K562 (cell line): ENCODE measurements at regions of chr12 and their contacts with region 1.

Region 1: DNA sequence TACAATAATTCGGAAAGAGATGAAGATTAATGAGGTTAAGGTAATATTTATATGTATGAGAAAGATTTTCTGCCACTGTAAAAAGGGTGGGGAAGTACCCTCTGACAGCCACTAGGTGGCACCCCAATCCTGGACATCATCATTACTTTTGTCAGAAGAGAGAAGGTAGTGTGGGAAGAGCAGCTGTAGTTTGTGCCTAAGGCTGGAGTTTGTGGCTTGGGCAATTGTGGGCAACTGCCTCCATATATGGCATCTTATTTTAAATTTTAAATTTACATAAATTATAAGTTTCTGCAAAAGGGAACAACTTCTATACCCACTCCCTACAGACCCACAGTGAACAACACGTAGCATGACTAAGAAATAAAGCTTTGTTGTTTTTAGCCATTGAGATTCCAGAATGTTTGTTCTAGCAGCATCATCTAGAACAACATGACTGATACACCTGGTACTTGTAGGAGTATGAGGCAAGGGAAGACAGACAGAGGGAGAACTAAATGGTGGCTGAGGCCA is 34.4 kb upstream of the SYCP3 start:
- DNase-seq: peak; percentile 64 to 78 (median 70)
- ATAC-seq: peak; percentile 91
- H3K4me3 ChIP-seq: no peak overlapping the region
- H3K27ac ChIP-seq: no peak overlapping the region
- H3K4me1 ChIP-seq: no peaks in the 10 kb centered on the region
- H3K27me3 ChIP-seq: no peaks in the 10 kb centered on the region
- CTCF ChIP-seq: peak; percentile 73 to 94 (median 82)
- EP300 ChIP-seq: 0 out of 2 replicates have a peak, but pooled peaks have one; percentile 21
- POLR2A ChIP-seq: no peak
- RAD21 ChIP-seq: peak; percentile 92 to 93

Region 2: DNA sequence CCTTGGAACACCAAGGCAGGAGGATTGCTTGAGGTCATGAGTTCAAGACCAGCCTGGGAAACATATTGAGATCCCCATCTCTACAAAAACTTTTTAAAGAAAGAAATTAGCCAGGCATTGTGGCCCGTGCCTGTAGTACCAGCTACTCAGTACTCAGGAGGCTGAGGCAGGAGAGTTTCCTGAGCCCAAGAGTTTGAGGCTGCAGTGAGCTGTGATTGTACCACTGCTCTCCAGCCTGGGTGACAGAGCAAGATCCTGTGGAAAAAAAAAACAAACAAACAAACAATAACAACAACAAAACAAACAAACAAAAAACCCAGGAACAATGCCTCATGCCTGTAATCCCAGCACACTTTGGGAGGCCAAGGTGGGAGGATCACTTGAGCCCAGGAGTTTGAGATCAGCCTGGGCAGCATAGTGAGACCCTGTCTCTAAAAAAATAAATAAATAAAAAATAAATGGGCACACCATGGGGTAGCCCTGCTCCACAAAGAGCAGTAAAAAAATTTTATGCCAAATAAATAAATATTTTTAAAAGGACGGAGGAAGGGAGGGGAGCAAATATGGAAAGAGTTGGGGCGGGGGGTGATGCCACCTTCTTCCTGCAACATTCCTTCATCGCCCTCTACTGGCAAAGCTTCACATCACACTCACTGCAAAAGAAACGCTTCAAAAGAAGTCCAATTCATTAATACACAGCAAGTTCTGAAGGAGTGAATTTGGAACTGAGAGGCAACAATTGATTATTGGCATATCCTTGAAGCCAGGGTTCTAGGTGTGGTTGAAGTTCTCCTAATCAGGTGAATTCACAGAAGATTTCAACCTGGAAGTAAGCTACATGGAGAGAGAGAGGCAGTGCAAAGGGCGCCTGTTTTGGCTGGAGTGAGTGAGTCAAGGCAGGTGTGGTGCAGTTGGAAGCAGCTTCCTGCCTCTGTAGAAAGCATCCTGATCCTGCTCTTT is 65.9 kb after region 1 on chr12:
- CTCF ChIA-PET with region 1: interaction called, 19 read pairs
- POLR2A ChIA-PET with region 1: no interaction called
- in situ Hi-C with region 1: loop called (anchors 5 kb)
- intact Hi-C with region 1: loop called (anchors 1 kb)
- DNase-seq: peak; percentile 63 to 79 (median 76)
- ATAC-seq: peak; percentile 90
- H3K4me3 ChIP-seq: no peak overlapping the region
- H3K27ac ChIP-seq: no peak overlapping the region
- H3K4me1 ChIP-seq: no peaks in the 10 kb centered on the region
- H3K27me3 ChIP-seq: no peaks in the 10 kb centered on the region
- CTCF ChIP-seq: peak; percentile 73 to 86 (median 81)
- EP300 ChIP-seq: no peak
- POLR2A ChIP-seq: no peak
- RAD21 ChIP-seq: peak; percentile 82 to 83